ENCODE measurements at regions of chr1 and their contacts with region 1.

Region 1: DNA sequence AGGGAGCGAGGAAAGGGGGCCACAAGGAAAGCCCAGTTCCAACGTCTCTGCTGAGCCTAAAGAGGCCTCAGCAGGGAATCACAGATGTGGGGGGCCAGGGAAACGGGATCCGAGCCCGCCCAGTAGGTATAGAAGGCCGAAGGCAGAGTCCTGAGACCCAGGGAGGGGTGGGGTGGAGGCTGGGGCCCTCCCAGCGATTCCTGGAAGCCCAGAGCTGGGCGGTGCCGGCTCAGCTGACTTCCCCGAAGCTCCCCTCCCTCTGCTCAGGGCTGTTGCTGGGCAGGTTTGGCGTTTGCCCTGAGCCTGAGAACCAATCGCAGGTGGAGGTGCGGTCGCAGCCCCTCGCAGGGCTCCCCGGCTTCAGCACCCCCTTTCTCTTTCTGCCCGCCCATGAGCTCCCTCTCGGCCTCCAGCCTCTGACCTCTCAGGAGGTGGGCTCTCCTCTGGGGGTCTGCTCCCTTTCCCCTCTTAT is 12.8 kb downstream of the ADAMTSL4 start:
- DNase-seq: peak; percentile 69
- H3K4me3 ChIP-seq: peak overlapping the region; percentile 34
- H3K27me3 ChIP-seq: no peaks in the 10 kb centered on the region
- CTCF ChIP-seq: no peak

Region 2: GRCh38 chr1:150221552-150221951 is 340.5 kb before region 1 on chr1:
- CTCF ChIA-PET with region 1: no interaction called
- POLR2A ChIA-PET with region 1: no interaction called
- DNase-seq: no peak
- H3K4me3 ChIP-seq: no peak overlapping the region
- H3K27me3 ChIP-seq: no peaks in the 10 kb centered on the region
- CTCF ChIP-seq: peak; percentile 56

Region 3: DNA sequence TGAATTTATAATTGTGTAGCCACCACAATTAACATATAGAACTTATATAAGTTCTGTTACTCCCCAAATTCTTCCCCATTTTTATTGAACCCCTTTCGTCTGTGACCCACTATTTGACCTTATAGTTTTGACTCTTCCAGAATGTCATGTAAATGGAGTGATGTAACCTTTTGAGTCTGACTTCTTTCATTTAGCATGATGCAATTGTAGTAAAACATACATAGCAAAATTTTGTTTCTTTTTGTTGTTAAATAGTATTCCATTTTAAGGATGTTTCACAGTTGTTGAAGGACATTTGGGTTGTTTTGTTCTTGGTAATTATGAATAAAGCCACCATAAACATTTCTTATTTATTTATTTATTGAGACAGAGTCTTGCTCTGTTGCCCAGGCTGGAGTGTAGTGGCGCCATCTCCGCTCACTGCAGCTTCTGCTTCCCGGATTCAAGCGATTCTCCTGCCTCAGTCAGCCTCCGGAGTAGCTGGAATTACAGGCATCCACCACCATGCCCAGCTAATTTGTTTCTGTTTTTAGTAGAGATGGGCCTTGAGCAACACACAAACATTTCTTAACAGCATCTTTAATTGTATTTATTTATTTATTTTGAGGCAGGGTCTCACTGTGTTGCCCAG is 164.5 kb before region 1 on chr1:
- CTCF ChIA-PET with region 1: no interaction called
- POLR2A ChIA-PET with region 1: no interaction called
- DNase-seq: no peak
- H3K4me3 ChIP-seq: no peak overlapping the region
- H3K27me3 ChIP-seq: no peaks in the 10 kb centered on the region
- CTCF ChIP-seq: no peak

Region 4: DNA sequence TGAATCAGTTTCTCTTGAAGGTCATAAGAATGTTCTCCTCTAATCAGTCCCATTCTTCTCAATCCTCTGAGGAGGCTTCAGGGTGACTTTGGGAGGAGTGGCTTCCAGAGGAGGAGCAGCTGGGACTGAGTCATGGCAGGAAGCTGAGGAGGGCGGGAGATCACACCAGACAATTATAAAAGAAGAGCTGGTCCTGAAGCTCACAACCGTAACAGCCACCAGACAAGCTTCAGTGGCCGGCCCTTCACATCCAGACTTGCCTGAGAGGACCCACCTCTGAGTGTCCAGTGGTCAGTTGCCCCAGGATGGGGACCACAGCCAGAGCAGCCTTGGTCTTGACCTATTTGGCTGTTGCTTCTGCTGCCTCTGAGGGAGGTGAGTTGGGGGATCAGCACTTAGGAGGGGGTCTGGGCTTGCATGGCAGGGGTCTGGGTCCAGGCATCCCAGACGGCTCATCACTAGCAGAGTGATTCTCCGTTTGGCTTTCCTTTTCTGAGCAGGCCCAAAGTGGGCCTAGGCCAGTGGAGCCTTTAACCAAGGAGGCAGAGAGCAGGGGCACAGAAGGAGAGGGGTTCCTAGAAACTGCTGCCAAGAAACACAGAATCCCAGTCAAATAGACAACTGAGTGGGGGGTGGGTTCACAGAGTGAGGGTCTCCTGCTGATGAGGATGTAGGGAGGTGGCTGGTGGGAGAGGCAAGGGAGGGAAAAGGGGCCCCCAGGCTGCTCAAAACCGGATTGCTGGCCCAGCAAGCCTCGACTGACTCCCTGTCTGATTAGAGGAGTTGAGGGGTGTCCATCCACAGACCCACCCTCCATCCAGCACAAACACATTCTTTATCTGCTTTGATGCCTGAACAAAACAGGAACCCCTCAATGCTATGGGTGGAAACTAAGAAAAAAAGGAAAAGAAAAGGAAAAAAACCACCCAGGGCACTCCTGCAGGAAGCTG is 53.8 kb before region 1 on chr1 and contains the start of gene ECM1:
- CTCF ChIA-PET with region 1: interaction called, 10 read pairs
- POLR2A ChIA-PET with region 1: no interaction called
- DNase-seq: peak; percentile 53
- H3K4me3 ChIP-seq: peak within 1 kb of the TSS; percentile 38
- H3K27me3 ChIP-seq: no peaks in the 10 kb centered on the region
- CTCF ChIP-seq: no peak
- polyA plus RNA-seq, gene ECM1: 108 and 204 TPM in 2 replicates

Region 5: DNA sequence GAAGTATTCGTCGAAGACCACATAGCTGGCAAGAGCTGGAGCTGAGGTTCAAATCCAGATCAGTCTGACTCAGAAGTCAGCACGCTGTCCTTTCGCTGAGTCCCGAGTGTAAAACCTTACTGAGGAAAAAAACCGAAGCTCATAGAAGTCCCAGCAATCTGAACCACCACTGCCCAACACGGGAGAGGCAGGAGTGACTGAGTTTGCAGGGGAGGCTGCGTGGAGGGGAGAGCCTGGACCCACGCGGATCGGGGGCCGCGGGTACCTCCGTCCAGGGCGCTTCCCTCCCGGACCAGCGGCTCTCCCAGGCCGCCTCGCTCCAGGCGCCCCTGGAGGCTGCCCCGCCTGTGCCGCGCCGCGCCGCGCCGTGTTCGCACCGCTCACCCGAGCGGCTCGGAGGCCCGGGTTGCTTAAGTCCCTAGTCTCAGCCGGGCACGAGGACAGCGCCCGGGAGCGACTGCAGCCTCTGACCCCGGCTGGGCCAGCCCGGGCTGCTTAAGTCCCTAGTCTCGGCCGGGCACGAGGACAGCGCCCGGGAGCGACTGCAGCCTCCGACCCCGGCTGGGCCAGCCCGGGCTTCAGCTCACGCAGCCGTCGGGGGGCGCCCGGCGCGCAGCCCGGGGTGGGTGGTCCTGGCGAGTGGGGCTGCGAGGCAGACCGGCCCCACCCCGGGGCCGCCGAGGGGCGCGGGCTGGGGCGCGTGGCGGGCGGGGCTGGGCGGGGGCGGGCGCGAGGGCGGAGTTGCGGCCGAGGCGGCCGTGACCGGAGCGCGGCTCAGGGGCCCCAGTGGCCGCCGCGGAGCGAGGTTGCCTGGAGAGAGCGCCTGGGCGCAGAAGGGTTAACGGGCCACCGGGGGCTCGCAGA is 13.1 kb before region 1 on chr1 and contains the start of gene ADAMTSL4:
- CTCF ChIA-PET with region 1: interaction called, 43 read pairs
- POLR2A ChIA-PET with region 1: no interaction called
- DNase-seq: no peak
- H3K4me3 ChIP-seq: peak within 1 kb of the TSS; percentile 52
- H3K27me3 ChIP-seq: no peaks in the 10 kb centered on the region
- CTCF ChIP-seq: 0 out of 2 replicates have a peak, but pooled peaks have one; percentile 2
- polyA plus RNA-seq, gene ADAMTSL4: 6.1 and 8.6 TPM in 2 replicates

Region 6: DNA sequence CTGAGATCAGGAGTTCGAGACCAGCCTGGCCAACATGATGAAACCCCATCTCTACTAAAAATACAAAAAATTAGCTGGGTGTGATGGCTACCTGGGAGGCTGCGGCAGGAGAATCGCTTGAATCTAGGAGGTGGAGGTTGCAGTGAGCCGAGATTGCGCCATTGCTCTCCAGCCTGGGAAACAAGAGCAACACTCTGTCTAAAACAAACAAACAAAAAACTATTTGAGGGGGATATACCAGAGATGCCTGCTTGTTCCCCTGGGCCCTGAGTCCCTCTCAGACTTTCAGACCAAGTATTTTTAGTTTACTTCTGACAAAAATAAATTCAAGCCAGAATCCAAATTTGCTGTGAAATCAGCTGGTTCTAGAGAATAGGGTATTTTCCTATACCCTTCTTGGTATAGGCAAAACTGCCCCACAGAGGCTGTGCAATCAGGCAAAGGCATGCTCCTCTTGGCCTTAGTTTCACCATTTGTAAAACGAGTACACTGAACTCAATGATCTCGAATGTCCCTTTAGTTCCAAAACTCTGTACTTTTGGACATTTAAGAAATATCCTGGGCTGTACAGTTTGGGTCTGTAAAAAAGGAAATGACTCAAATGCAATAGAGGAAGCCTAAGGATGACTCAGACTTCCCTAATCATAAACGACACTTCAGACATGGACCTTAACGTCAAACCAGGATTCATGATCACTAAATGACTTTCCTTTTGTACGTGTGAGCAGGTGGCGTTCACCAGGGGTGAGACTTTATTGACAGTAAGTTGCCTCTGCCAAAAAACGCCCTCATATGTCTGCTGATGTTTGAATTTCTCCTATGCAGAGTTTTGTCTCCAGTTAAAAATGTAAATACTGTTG is 51.3 kb after region 1 on chr1:
- CTCF ChIA-PET with region 1: interaction called, 121 read pairs
- POLR2A ChIA-PET with region 1: no interaction called
- DNase-seq: peak; percentile 74
- H3K4me3 ChIP-seq: no peak overlapping the region
- H3K27me3 ChIP-seq: no peaks in the 10 kb centered on the region
- CTCF ChIP-seq: no peak

Region 7: DNA sequence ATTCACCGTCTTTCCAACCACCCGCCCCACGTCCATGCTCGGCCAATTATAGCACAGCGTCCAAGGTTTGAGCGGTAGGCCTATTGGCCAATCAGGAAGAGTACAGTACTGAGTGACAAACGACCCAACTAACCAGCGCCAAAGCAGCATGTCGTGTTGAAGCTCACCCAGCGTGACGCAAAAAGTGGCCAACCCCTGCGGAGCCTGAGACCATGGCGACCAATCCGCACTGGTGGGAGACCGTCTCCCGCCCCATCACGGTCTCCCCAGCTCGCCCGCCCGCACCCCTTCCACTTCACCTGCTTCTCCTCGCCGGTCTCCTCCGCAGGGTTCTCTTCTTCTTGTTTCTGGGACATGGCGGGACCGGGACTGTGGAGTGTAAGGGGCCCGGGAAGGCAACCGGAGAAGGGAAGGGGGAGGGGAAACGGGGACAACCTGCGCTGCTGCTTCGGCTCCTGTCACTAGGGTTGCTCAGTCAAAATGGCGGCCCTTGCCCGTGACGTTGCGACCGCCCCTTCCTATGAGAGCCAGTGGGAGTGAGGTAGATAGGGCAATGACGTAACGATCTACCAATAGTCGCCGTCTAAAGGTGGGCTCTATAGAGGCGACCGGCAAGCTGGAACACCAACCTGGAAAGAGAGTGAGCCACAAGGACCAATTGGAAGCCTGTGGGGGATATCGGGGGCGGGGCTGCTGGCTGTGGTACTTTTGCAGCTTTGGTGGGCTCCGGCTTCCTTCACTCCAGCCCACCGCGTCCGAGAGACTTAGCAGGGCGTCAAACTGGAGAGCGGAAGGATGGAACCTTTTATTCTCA is 67.3 kb after region 1 on chr1 and contains the start of gene ENSA:
- CTCF ChIA-PET with region 1: interaction called, 49 read pairs
- POLR2A ChIA-PET with region 1: no interaction called
- DNase-seq: peak; percentile 99
- H3K4me3 ChIP-seq: peak within 1 kb of the TSS; percentile 74
- H3K27me3 ChIP-seq: no peaks in the 10 kb centered on the region
- CTCF ChIP-seq: no peak
- polyA plus RNA-seq, gene ENSA: 35.8 and 47.2 TPM in 2 replicates

Region 8: GRCh38 chr1:150813058-150813707 is 251.2 kb after region 1 on chr1:
- CTCF ChIA-PET with region 1: interaction called, 17 read pairs
- POLR2A ChIA-PET with region 1: interaction called, 15 read pairs
- DNase-seq: no peak
- H3K4me3 ChIP-seq: no peak overlapping the region
- H3K27me3 ChIP-seq: no peaks in the 10 kb centered on the region
- CTCF ChIP-seq: peak; percentile 85

Measured in BJ (cell line).